ENCODE measurements at regions of chr2 and their contacts with region 1.

Region 1: GRCh38 chr2:226649871-226650660 is 149.6 kb downstream of the IRS1 start:
- DNase-seq: peak; percentile 87
- H3K4me3 Mint-ChIP-seq: peak overlapping the region; percentile 60
- H3K27ac Mint-ChIP-seq: peak overlapping the region; percentile 86
- H3K4me1 Mint-ChIP-seq: peaks cover 57% of the 10 kb centered on the region
- H3K27me3 Mint-ChIP-seq: no peaks in the 10 kb centered on the region
- CTCF ChIP-seq: no peak

Region 2: DNA sequence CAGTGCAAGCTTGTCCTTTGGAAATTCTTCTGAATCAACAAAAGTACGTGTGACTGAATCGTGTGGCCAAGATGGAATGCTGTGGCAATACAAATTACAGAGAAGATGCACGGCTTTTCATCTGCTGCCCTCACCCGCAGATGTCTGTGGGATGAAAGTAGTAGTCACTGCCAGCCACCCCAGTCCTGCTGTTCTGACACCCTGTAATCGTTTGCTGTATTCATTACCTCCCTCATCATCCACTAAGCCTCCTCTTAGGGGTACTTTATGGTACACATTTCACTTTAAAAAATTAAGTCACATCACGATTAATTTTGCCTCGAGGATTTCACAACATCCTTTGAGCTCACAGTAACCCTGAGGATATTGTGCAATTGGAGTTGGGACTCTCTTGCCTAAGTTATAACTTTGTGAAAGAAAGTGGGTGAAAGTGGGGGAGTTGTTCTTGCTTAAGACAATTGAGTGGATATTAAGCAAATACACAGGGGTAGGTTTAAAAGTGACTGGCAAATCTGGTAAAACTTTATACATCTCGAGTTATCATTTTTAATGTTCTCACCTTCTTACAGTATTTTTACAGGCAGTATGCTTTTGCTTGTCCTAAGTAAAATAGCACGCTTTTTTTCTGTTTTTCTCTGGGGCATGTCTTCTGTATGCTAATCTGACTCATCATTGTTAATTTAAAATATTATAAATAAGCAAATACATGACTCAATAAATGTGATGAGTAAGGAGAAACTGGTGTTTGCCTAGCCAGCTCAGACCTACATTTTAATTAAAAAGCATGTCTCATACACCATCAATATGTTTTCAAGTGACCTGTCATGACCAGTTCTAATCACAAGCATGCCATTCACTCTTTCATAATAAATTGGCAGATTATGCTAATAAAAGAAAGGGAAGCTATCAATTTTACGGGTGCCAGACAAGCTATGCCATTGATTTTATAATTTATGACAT is 531.3 kb before region 1 on chr2:
- CTCF ChIA-PET with region 1: no interaction called
- intact Hi-C with region 1: loop called (anchors 5 kb)
- DNase-seq: peak; percentile 10
- H3K4me3 Mint-ChIP-seq: peak overlapping the region; percentile 25
- H3K27ac Mint-ChIP-seq: peak overlapping the region; percentile 67
- H3K4me1 Mint-ChIP-seq: peaks cover 43% of the 10 kb centered on the region
- H3K27me3 Mint-ChIP-seq: no peaks in the 10 kb centered on the region
- CTCF ChIP-seq: no peak

Region 3: DNA sequence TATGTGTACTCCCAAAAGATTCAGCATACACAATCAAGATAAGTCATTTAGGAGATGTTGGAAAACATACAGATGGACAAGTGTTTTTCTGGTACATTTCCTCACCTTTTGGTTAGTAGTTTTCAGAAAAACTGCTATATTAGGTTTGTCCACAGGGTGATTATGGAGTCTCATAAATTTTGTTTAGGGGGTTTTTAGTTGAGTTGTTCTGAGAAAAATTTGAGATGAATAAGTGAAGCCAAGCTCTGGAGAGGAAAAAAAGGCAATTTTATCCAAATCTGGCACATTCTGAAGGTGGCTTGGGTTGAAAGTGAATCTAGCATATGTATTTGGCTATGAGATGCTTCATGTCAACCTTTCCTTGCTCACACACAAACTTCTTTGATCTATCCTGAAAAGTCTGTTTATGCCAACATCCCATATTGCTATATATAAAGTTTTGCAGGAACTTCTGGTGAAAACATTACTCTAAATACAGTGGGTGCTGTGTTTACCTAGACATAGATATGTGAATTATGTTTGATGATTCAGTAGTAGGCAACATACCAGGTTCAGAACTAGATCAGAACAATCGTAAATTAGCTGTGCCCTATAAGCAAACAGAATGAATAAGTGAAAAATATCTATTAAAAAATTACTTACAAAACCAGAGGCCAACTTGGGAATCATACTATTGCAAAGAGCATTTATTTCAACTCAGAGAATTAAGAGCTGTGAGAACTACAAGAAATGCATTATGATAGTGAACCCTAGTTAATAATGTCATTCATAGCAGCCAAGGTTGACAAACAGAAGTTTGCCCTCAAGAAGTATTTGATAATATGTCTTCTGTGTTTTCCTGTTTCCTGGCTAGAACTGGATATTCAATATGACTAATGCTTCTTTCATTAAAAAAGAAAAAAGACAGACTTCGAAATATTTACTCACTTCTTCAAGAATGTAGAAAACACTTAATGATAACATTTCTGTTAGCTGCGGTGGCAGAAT is 402.5 kb before region 1 on chr2:
- CTCF ChIA-PET with region 1: no interaction called
- intact Hi-C with region 1: loop called (anchors 10 kb)
- DNase-seq: no peak
- H3K4me3 Mint-ChIP-seq: no peak overlapping the region
- H3K27ac Mint-ChIP-seq: peak overlapping the region; percentile 77
- H3K4me1 Mint-ChIP-seq: peaks cover 15% of the 10 kb centered on the region
- H3K27me3 Mint-ChIP-seq: no peaks in the 10 kb centered on the region
- CTCF ChIP-seq: no peak

Region 4: DNA sequence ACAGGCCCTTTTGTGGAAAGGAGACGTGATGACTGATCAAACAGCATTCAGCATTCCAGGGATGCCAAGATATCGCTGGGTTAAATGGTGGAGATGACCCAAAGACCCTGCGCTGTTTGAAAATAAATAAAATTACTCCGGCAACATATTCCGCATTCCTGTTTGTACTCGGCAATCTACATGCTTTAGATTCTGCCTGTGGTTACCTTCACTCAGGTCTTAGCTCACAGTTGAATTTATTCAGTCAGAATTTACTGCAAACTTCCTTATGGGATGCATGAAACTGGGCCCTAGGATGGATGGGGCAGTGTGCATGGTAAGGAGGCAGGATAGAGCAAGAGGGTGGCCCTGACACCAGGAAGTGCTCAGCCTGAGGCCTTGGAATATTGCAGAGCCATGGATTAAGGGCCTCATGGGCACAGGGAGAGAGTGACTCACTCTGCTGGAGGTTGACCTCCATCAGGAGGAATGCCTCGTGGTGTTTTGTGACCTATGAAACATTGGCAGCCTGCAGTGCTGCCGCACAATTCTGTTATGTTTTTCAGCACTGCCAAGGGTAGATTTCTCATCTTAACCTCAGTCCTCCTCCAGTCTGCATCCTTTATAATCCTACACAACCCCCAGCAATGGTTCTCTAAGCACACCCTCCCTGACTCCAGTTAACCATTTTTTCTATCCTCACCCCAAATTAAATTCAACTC is 171.8 kb before region 1 on chr2:
- CTCF ChIA-PET with region 1: no interaction called
- intact Hi-C with region 1: loop called (anchors 1 kb)
- DNase-seq: peak; percentile 76
- H3K4me3 Mint-ChIP-seq: no peak overlapping the region
- H3K27ac Mint-ChIP-seq: peak overlapping the region; percentile 85
- H3K4me1 Mint-ChIP-seq: peaks cover 62% of the 10 kb centered on the region
- H3K27me3 Mint-ChIP-seq: no peaks in the 10 kb centered on the region
- CTCF ChIP-seq: no peak

Region 5: DNA sequence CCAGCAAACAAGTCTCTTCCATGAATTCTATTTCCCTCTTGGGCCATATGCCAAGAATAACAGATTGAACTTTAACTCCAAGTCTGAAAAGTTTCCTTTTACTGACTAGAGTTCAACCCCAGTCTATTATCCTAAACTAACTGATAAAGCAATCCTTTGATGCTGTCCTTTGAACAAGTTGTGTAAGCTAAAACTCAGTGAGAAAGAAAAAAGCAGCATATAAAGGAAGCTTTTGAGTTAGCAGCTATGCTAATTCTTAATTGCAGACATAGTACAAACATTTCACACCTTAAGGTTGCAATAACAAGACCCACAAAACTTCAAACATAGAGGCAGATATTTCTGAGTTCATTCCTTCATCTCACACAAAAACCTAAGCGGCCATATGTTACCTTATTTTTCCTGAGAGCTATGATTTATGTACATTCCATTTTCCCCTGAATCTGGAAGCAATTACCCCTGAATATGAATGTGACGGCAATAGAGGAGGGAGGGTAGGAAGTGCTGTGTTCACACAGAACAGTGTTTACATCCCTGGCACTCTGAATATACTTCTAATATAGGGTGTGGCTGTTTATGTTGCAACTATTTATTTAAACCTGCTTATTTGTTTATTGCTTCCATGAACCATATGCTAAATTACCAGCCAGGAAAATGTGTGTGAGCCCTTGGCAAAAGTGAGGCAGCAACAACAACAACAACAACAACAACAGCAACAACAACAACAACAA is 31.0 kb before region 1 on chr2:
- CTCF ChIA-PET with region 1: no interaction called
- intact Hi-C with region 1: loop called (anchors 2 kb)
- DNase-seq: no peak
- H3K4me3 Mint-ChIP-seq: no peak overlapping the region
- H3K27ac Mint-ChIP-seq: no peak overlapping the region
- H3K4me1 Mint-ChIP-seq: peaks cover 29% of the 10 kb centered on the region
- H3K27me3 Mint-ChIP-seq: no peaks in the 10 kb centered on the region
- CTCF ChIP-seq: no peak

Region 6: DNA sequence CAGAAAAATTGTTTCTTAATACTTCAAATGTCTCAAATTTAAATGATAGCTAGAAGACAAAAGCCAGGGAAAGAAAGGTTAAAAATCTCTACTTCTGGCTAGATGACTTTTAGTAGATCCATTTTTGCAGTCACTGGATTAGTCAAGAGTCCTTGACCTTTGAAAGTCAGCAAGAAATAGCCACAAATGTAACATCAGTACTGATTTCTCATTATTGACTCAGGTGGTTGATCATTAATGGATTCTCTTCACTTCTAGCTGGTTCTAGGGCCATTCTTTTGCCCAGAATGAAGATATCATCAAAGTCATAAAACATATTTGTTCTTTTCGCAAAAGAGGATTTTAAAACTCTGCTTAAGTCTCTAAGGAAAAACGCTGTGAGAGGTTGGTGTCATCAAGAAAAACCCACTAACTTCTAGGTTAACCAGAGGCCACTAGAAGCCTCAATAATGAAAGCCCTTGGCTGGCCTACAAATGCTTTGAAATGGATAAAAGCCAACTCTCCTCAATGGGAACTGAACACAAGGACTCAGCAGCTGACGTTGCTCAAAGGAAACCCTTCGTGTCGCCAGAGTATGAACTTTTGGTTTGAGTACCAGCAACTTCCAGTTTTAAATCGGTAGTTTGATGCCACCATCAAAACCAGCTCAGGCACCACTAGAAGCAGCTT is 83.3 kb after region 1 on chr2:
- CTCF ChIA-PET with region 1: no interaction called
- intact Hi-C with region 1: loop called (anchors 5 kb)
- DNase-seq: no peak
- H3K4me3 Mint-ChIP-seq: no peak overlapping the region
- H3K27ac Mint-ChIP-seq: no peak overlapping the region
- H3K4me1 Mint-ChIP-seq: peaks cover 24% of the 10 kb centered on the region
- H3K27me3 Mint-ChIP-seq: no peaks in the 10 kb centered on the region
- CTCF ChIP-seq: no peak

Region 7: GRCh38 chr2:226906163-226906693 is 256.2 kb after region 1 on chr2:
- CTCF ChIA-PET with region 1: no interaction called
- intact Hi-C with region 1: no loop called
- DNase-seq: no peak
- H3K4me3 Mint-ChIP-seq: no peak overlapping the region
- H3K27ac Mint-ChIP-seq: no peak overlapping the region
- H3K4me1 Mint-ChIP-seq: no peaks in the 10 kb centered on the region
- H3K27me3 Mint-ChIP-seq: no peaks in the 10 kb centered on the region
- CTCF ChIP-seq: no peak